ENCODE measurements at regions of chr4 and their contacts with region 1.

Region 1: DNA sequence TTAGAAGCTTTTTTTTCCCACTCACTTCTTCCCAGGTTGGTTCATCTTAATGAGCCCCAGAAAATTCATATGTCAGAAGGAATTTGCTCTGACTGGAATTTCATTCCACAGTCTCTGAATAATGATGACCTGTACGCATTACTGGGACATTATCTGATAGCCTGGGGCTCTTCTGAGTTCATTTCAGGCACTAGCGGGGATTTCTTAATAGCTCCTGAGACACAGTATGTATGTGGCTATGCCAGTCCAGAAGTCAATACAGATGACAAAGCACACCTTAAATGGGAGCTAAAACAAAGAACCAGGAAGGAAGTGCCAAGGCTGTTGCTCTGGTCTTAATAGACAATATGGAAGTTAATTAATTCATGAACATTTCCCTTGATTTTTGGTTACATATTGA is 295.2 kb upstream of the IGFBP7 start:
- DNase-seq: peak; percentile 45 to 58
- H3K4me3 ChIP-seq: no peak overlapping the region
- H3K27ac ChIP-seq: peak overlapping the region; percentile 68
- H3K4me1 ChIP-seq: no peaks in the 10 kb centered on the region
- H3K27me3 ChIP-seq: no peaks in the 10 kb centered on the region
- CTCF ChIP-seq: no peak

Region 2: DNA sequence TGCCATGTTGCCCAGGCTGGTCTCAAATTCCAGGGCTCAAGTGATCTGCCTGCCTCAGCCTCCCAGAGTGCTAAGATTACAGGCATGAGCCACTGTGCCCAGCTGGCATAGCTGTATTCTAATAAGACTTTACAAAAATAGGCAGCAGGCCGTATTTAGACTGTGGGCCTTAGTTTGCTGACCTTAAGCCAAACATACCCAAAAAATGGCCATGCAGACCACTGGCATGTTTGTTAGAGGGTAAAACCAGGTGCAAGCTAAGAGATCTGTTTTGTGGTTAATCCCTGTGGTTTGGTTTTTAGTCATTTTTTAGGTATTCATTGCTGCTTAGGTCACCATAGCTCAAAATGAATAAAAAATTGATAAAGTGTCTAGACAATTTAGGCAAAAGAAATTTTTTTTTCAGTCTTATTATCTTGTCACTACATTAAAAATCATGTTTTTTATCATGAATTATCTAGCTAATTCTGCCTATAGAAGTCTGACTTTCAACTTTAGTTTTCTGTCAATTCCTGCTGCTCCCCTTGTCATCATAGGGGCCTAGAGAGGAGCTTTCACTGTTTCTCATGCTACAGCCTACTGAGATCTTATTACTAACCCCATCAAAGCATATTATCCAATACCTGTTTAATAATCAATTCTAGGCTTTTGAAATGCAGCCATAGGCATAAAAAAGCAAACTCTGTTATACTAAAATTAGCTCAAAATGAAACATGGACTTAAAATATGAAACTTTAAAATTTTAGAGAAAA is 576.4 kb before region 1 on chr4:
- CTCF ChIA-PET with region 1: no interaction called
- POLR2A ChIA-PET with region 1: no interaction called
- intact Hi-C with region 1: no loop called
- DNase-seq: no peak
- H3K4me3 ChIP-seq: no peak overlapping the region
- H3K27ac ChIP-seq: no peak overlapping the region
- H3K4me1 ChIP-seq: no peaks in the 10 kb centered on the region
- H3K27me3 ChIP-seq: no peaks in the 10 kb centered on the region
- CTCF ChIP-seq: no peak

Region 3: GRCh38 chr4:57303012-57303751 is 102.2 kb before region 1 on chr4:
- CTCF ChIA-PET with region 1: no interaction called
- POLR2A ChIA-PET with region 1: no interaction called
- intact Hi-C with region 1: loop called (anchors 10 kb)
- DNase-seq: peak in 1 of 2 experiments; percentile 51
- H3K4me3 ChIP-seq: no peak overlapping the region
- H3K27ac ChIP-seq: no peak overlapping the region
- H3K4me1 ChIP-seq: no peaks in the 10 kb centered on the region
- H3K27me3 ChIP-seq: no peaks in the 10 kb centered on the region
- CTCF ChIP-seq: no peak